Dendritic cell treated with granulocyte-macrophage colony-stimulating factor and Interleukin-4, amounts not matched to agents 40 ng/mL and 50 ng/mL, for 4 days (primary cell): ENCODE measurements at regions of chr4 and their contacts with region 1.

Region 1: GRCh38 chr4:15882675-15883086 is 55.9 kb downstream of the FGFBP1 start:
- H3K4me3 Mint-ChIP-seq: no peak overlapping the region
- H3K27ac Mint-ChIP-seq: no peak overlapping the region
- H3K4me1 Mint-ChIP-seq: no peaks in the 10 kb centered on the region
- H3K27me3 Mint-ChIP-seq: peaks cover 1% of the 10 kb centered on the region

Region 2: GRCh38 chr4:15729910-15730533 is 152.7 kb before region 1 on chr4:
- intact Hi-C with region 1: loop called (anchors 10 kb)
- H3K4me3 Mint-ChIP-seq: no peak overlapping the region
- H3K27ac Mint-ChIP-seq: no peak overlapping the region
- H3K4me1 Mint-ChIP-seq: peaks cover 5% of the 10 kb centered on the region
- H3K27me3 Mint-ChIP-seq: no peaks in the 10 kb centered on the region

Region 3: DNA sequence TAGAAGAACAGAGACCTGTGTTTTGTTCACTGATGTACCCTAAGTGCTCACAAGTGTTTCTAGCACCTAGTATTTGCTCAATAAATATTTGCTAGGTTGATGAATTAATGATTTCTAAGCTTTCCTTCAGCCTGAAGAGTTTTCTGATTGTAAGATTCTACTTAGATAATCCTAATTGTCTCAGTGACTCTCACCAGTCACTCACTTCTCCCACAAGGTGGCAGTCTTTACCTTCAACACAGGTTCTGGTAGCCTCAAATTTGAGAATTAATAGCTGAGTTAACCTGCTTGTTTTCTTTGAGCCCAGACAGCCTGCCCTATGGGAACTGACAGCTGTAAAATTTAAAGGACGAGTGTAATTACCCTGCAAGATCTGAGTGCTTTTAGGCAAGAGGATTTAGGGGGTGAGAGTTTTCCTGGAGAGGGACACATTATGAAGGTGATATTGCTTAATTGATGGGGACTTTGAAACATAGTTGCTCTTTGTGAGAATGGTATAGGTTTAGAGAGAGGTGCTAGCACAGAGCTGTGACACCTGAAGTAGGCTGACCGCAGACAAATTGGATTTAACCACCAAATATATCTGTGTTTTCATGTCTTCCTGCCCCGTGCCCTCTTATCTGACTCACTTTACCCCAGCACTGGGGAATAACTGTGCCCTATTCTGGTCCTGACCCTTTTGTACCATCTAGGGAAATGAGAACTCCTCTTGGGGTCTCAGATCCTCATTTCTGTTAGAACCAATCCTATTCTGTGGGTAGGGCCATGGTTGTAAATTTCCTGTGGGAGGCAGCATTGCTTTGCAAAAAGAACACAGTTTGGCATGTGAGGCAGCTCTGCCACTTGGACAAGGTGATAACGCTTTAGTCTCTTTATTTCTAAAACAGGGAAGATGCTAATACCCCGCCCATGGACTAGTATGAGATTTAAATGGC is 76.8 kb before region 1 on chr4:
- intact Hi-C with region 1: loop called (anchors 5 kb)
- H3K4me3 Mint-ChIP-seq: no peak overlapping the region
- H3K27ac Mint-ChIP-seq: peak overlapping the region; percentile 43
- H3K4me1 Mint-ChIP-seq: peaks cover 48% of the 10 kb centered on the region
- H3K27me3 Mint-ChIP-seq: no peaks in the 10 kb centered on the region

Region 4: GRCh38 chr4:15956179-15956850 is 73.6 kb after region 1 on chr4:
- intact Hi-C with region 1: loop called (anchors 2 kb)
- H3K4me3 Mint-ChIP-seq: no peak overlapping the region
- H3K27ac Mint-ChIP-seq: no peak overlapping the region
- H3K4me1 Mint-ChIP-seq: no peaks in the 10 kb centered on the region
- H3K27me3 Mint-ChIP-seq: no peaks in the 10 kb centered on the region

Region 5: GRCh38 chr4:15971068-15971801 is 88.6 kb after region 1 on chr4:
- intact Hi-C with region 1: no loop called
- H3K4me3 Mint-ChIP-seq: no peak overlapping the region
- H3K27ac Mint-ChIP-seq: no peak overlapping the region
- H3K4me1 Mint-ChIP-seq: no peaks in the 10 kb centered on the region
- H3K27me3 Mint-ChIP-seq: peaks cover 1% of the 10 kb centered on the region

Region 6: DNA sequence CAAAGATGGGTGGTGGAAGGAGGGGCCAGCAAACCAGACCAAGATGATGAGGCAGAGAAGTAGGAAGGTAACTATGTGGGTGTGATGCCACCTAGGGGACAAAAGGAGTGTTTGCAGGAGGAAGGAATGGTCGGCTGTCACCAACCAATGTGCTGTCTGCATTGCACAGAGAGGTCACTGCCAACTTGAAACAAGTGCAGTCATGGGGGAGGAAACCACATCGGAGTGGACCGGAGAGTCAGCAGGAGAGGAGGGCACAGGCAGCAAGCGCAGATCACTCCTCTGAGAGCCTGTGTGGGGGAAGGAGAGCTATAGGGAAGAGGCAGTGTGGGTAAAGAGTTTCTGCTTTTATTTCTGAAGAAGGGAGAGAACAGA is 118.8 kb after region 1 on chr4:
- intact Hi-C with region 1: loop called (anchors 1 kb)
- H3K4me3 Mint-ChIP-seq: no peak overlapping the region
- H3K27ac Mint-ChIP-seq: no peak overlapping the region
- H3K4me1 Mint-ChIP-seq: no peaks in the 10 kb centered on the region
- H3K27me3 Mint-ChIP-seq: no peaks in the 10 kb centered on the region

Region 7: DNA sequence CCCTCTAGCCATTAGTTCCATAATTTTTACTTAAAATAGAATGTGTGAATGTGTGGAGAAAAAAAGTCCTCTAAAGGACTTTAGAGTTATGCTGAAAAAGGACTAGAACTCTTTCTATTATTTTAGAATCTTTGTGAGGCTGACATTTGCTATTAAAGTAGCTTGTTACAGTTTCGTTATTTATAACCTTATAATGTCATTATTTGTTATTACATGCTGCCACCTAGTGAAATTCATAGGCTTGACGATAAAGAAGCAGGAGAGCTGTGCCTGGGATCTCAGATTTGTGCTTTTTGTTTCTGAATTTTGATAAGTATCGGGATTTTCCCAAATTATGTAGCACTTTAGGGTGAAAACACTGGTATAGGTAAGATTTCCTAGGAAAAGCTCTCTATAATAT is 382.1 kb after region 1 on chr4:
- intact Hi-C with region 1: loop called (anchors 5 kb)
- H3K4me3 Mint-ChIP-seq: no peak overlapping the region
- H3K27ac Mint-ChIP-seq: no peak overlapping the region
- H3K4me1 Mint-ChIP-seq: peaks cover 57% of the 10 kb centered on the region
- H3K27me3 Mint-ChIP-seq: no peaks in the 10 kb centered on the region